ENCODE measurements at regions of chr2 and their contacts with region 1.

Region 1: GRCh38 chr2:48369971-48370370 is 160.0 kb upstream of the STON1 start:
- DNase-seq: no peak
- ATAC-seq: no peak
- H3K4me3 Mint-ChIP-seq: no peak overlapping the region
- H3K27ac Mint-ChIP-seq: no peak overlapping the region
- H3K4me1 Mint-ChIP-seq: peaks cover 11% of the 10 kb centered on the region
- H3K27me3 Mint-ChIP-seq: no peaks in the 10 kb centered on the region
- CTCF ChIP-seq: no peak

Region 2: GRCh38 chr2:48406116-48406515 is 36.1 kb after region 1 on chr2:
- CTCF ChIA-PET with region 1: no interaction called
- POLR2A ChIA-PET with region 1: no interaction called
- intact Hi-C with region 1: loop called (anchors 5 kb)
- DNase-seq: no peak
- ATAC-seq: no peak
- H3K4me3 Mint-ChIP-seq: no peak overlapping the region
- H3K27ac Mint-ChIP-seq: no peak overlapping the region
- H3K4me1 Mint-ChIP-seq: peaks cover 4% of the 10 kb centered on the region
- H3K27me3 Mint-ChIP-seq: no peaks in the 10 kb centered on the region
- CTCF ChIP-seq: no peak